ENCODE measurements at regions of chr2 and their contacts with region 1.

Region 1: DNA sequence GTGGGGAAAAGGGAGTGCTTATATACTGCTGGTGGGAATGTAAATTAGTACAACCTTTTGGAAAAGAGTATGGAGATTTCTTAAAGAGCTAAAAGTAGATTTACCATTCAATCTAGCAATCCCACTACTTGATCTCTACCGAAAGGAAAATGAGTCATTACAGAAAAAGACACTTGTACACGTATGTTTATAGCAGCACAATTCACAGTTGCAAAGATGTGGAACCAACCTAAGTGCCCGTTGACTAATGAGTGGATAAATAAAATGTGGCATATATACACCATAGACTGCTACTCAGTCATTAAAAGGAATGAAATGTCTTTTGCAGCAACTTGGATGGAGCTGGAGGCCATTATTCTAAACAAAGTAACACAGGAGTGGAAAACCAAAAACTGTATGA is 29.5 kb downstream of the FLACC1 start:
- DNase-seq: no peak
- H3K4me3 ChIP-seq: no peak overlapping the region
- H3K4me3 Mint-ChIP-seq: no peak overlapping the region
- H3K27ac Mint-ChIP-seq: no peak overlapping the region
- H3K4me1 ChIP-seq: no peaks in the 10 kb centered on the region
- H3K4me1 Mint-ChIP-seq: no peaks in the 10 kb centered on the region
- H3K27me3 ChIP-seq: no peaks in the 10 kb centered on the region
- H3K27me3 Mint-ChIP-seq: peaks cover 7% of the 10 kb centered on the region
- CTCF ChIP-seq: no peak

Region 2: DNA sequence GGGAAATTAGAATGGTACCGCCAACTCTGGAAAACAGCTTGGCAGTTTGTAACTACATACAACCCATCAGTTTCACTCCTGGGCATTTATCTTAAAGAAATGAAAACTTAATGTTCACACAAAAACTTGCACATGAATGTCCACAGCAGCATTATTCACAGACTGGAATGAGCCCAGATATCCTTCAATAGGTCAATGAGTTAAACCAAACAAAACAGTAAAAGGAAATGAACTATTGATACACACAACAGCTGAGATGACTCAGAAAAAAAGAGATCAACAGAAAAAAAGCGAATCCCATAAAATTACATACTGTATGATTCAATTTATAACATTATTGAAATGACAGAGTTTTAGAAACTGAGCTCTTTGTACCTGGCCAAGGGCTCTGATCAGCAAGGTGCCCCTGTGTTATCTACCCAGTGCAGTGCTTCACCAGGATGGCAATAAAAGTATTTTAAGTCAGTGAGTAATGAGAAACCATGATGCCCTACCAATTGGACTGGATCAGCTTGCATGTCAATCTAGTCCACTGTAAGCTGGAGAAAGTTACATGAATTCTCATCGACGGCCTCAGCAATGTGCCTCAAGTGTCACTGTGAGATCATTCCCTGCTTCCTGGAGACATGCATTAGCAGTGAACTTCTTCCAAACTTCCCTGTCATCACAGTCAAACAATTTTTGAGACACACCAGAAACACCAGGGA is 293.8 kb after region 1 on chr2:
- CTCF ChIA-PET with region 1: no interaction called
- POLR2A ChIA-PET with region 1: no interaction called
- intact Hi-C with region 1: no loop called
- DNase-seq: no peak
- H3K4me3 ChIP-seq: no peak overlapping the region
- H3K4me3 Mint-ChIP-seq: no peak overlapping the region
- H3K27ac Mint-ChIP-seq: no peak overlapping the region
- H3K4me1 ChIP-seq: no peaks in the 10 kb centered on the region
- H3K4me1 Mint-ChIP-seq: no peaks in the 10 kb centered on the region
- H3K27me3 ChIP-seq: no peaks in the 10 kb centered on the region
- H3K27me3 Mint-ChIP-seq: no peaks in the 10 kb centered on the region
- CTCF ChIP-seq: no peak

Region 3: DNA sequence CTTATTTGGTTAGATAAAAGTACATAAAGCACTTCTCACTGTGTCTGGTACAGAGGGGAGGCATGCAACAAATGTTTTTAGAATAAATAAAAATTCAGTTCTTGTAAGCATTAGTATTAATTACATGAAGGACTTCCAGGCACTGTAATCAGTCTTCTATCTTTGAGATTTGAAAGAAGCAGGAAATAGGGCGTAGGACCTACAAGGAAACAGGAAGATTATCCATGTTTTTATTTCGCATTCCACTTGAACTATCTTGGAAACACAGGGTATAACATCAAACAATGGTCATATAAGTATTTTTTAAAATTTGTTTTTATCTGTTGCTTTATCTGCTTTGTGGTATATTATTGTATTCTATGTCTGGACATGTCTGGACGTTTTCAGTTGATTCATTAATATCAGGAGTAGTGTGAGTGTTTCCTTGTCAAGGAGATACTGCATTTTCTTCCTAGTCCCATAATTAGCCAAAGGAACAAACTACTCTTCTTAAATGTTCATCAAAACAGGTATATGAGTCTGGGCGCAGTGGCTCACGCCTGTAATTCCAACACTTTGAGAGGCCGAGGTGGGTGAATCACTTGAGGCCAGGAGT is 1081.0 kb after region 1 on chr2:
- CTCF ChIA-PET with region 1: interaction called, 15 read pairs
- POLR2A ChIA-PET with region 1: no interaction called
- intact Hi-C with region 1: no loop called
- DNase-seq: no peak
- H3K4me3 ChIP-seq: no peak overlapping the region
- H3K4me3 Mint-ChIP-seq: no peak overlapping the region
- H3K27ac Mint-ChIP-seq: no peak overlapping the region
- H3K4me1 ChIP-seq: peaks cover 7% of the 10 kb centered on the region
- H3K4me1 Mint-ChIP-seq: no peaks in the 10 kb centered on the region
- H3K27me3 ChIP-seq: no peaks in the 10 kb centered on the region
- H3K27me3 Mint-ChIP-seq: no peaks in the 10 kb centered on the region
- CTCF ChIP-seq: no peak